ENCODE measurements at regions of chr19 and their contacts with region 1.

Region 1: GRCh38 chr19:14136509-14137281 is at the start of gene ASF1B:
- DNase-seq: peak; percentile 99
- ATAC-seq: peak; percentile 88
- H3K4me3 Mint-ChIP-seq: peak within 1 kb of the TSS; percentile 88
- H3K27ac Mint-ChIP-seq: peak within 1 kb of the TSS; percentile 94
- H3K4me1 Mint-ChIP-seq: peaks cover 34% of the 10 kb centered on the region
- H3K27me3 Mint-ChIP-seq: no peaks in the 10 kb centered on the region
- total RNA-seq, gene ASF1B: 117 to 124 TPM

Region 2: GRCh38 chr19:14073261-14073924 is 63.3 kb before region 1 on chr19:
- CTCF ChIA-PET with region 1: interaction called, 38 read pairs
- DNase-seq: peak; percentile 82
- ATAC-seq: peak; percentile 79
- H3K4me3 Mint-ChIP-seq: peak overlapping the region; percentile 84
- H3K27ac Mint-ChIP-seq: peak overlapping the region; percentile 81
- H3K4me1 Mint-ChIP-seq: peaks cover 23% of the 10 kb centered on the region
- H3K27me3 Mint-ChIP-seq: peaks cover 3% of the 10 kb centered on the region

Region 3: DNA sequence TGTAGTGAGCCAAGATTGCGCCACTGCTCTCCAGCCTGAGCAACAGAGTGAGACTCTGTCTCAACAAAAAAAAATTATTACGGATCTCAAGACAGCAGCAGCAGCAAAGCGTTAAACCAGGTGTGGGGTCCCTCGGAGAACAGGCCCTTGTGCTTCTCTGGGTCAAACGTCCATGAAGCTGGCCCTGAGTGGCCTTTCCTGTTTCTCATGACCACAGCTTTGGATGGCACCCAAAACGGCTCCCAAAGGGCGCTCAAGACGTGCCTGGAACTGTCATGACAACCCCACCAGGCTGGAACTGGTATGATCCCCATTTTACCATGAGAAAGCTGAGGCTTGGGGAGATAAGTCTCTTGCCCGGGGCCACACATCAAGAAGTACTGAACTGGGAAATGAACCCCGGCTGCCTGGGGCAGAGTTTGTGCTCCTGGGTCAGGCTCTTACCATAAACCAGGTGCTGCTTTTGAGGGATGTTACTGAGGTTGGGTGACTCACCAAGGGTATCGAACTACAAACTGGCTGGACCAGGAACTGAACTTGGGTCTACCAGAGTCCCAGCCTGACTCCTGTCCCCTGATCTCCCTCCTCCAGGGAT is 34.5 kb before region 1 on chr19:
- CTCF ChIA-PET with region 1: no interaction called
- DNase-seq: no peak
- ATAC-seq: no peak
- H3K4me3 Mint-ChIP-seq: no peak overlapping the region
- H3K27ac Mint-ChIP-seq: no peak overlapping the region
- H3K4me1 Mint-ChIP-seq: no peaks in the 10 kb centered on the region
- H3K27me3 Mint-ChIP-seq: no peaks in the 10 kb centered on the region

Region 4: DNA sequence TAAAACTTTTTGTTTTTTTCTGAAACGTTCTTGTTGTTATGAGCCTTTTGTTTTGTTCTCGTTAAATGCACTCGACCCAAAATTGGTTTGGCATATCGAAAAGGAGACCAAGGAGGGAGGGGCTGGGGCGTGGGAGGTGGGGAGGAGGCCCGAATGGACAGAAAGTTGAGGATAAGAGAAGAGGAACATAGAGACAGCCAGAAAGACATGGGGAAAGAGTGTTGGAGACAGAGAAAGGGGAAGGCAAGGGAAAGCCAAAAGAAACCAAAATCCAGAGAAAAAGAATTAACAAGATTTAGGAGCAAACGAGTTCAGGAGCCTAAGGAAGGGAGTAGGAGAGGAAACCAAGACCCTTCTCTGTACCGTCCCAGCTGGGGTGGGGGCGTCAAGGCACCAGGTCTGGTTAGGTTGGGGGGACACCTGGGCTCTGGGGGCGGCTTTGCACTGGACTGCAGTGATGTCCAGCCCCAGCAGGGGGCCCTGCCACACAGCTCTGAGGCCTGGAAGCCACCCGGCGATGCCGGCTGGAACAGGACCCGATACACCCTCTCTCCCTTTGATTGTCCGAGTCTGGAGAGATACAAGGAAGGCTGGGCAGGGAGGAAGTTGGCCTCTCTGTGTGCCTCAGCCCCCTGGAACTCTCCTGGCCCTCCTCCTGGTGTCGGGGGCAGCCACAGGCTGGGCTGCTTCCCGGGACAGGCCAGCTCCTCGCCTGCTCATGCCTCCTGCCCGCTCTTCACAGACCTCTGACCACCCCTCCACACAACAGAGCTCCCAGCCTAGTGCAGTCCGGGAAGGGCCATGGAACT is 11.3 kb after region 1 on chr19:
- CTCF ChIA-PET with region 1: interaction called, 22 read pairs
- DNase-seq: peak; percentile 68
- ATAC-seq: peak; percentile 63
- H3K4me3 Mint-ChIP-seq: no peak overlapping the region
- H3K27ac Mint-ChIP-seq: peak overlapping the region; percentile 71
- H3K4me1 Mint-ChIP-seq: peaks cover 19% of the 10 kb centered on the region
- H3K27me3 Mint-ChIP-seq: no peaks in the 10 kb centered on the region

Region 5: DNA sequence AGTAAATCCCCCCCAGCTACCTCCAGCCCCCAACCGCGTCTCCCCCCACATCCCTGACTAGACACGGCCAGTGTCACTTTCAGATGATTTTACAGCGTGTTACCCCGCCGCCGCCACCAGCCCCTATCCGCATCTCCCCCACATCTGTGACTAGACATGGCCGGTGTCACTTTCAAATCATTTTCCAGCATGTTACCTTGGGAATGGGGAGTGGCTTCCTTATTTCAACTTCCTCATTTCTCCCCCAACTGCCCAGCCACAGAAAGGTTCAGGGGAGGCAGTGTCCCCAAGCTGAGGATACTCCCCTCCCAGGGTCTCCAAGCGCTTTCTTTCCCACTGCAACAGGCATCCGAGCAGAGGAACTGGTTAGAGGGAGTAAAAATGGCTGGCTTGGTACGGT is 50.9 kb after region 1 on chr19:
- CTCF ChIA-PET with region 1: no interaction called
- DNase-seq: no peak
- ATAC-seq: no peak
- H3K4me3 Mint-ChIP-seq: no peak overlapping the region
- H3K27ac Mint-ChIP-seq: no peak overlapping the region
- H3K4me1 Mint-ChIP-seq: peaks cover 9% of the 10 kb centered on the region
- H3K27me3 Mint-ChIP-seq: no peaks in the 10 kb centered on the region

Region 6: GRCh38 chr19:14218620-14219330 is 82.1 kb after region 1 on chr19:
- CTCF ChIA-PET with region 1: interaction called, 15 read pairs
- DNase-seq: no peak
- ATAC-seq: no peak
- H3K4me3 Mint-ChIP-seq: no peak overlapping the region
- H3K27ac Mint-ChIP-seq: no peak overlapping the region
- H3K4me1 Mint-ChIP-seq: peaks cover 20% of the 10 kb centered on the region
- H3K27me3 Mint-ChIP-seq: peaks cover 4% of the 10 kb centered on the region

Region 7: DNA sequence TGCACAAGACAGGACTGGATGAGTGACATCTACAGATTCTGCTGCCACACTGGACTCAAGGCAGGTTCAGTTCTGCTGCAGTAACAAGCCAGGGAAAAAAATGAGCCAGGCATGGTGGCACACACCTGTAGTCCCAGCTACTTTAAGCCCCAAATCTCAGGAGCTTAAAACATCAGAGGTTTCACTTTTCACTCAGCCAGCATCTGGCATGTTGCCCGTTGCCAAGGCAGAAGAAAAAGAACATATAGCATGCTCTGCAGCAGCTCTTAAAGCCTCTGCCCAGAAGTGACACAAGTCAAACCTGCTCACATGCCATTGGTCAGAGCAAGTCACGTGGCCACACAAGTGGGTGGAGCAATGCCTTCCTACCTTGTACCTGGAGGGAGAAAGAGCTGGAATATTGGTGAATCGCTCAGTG is 229.8 kb after region 1 on chr19:
- CTCF ChIA-PET with region 1: interaction called, 12 read pairs
- DNase-seq: peak; percentile 93
- ATAC-seq: peak; percentile 37
- H3K4me3 Mint-ChIP-seq: peak overlapping the region; percentile 12
- H3K27ac Mint-ChIP-seq: peak overlapping the region; percentile 89
- H3K4me1 Mint-ChIP-seq: peaks cover 74% of the 10 kb centered on the region
- H3K27me3 Mint-ChIP-seq: no peaks in the 10 kb centered on the region

Region 8: DNA sequence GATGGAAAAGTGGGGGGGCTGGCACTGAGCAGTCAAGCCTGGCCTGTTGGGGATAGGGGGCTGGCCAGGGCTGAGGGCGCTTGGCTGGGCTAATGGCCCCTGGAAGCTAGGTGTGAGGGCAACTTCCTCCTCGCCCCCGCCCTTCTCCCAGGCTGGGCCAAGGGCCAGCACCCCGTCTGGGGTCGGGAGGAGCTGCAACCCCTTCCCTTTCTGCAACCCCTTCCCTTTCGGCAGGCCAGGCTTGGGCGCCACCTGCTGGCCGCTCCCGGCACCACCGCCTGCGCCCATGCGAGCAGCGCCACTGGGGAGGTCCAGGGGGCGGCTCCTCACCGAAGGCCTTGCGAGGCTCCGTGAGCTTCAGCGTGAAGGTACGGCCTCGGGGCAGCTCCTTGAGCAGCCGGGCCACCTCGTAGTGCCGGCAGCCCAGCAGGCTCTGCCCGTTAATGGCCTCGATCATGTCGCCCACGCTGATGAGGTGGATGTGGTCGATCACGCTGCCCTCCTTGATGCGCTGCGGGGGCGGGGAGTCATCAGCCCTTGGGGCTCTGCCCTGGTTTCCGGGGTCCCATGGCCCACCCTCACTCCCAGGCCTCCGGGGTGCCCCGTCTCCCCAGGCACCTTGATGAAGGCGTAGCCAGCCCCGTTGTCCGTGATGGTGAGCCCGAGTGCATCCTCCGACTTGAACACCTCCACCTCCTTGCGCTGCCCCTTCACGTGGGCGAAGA is 343.4 kb after region 1 on chr19:
- CTCF ChIA-PET with region 1: interaction called, 26 read pairs
- DNase-seq: peak; percentile 79
- ATAC-seq: peak; percentile 83
- H3K4me3 Mint-ChIP-seq: no peak overlapping the region
- H3K27ac Mint-ChIP-seq: no peak overlapping the region
- H3K4me1 Mint-ChIP-seq: peaks cover 18% of the 10 kb centered on the region
- H3K27me3 Mint-ChIP-seq: no peaks in the 10 kb centered on the region